ENCODE measurements at regions of chr10 and their contacts with region 1.

Region 1: GRCh38 chr10:110067960-110068770 is 60.4 kb downstream of the ADD3 start:
- DNase-seq: no peak
- ATAC-seq: peak; percentile 62
- H3K4me3 Mint-ChIP-seq: peak overlapping the region; percentile 76
- H3K27ac Mint-ChIP-seq: peak overlapping the region; percentile 97
- H3K4me1 Mint-ChIP-seq: peaks cover 81% of the 10 kb centered on the region
- H3K27me3 Mint-ChIP-seq: no peaks in the 10 kb centered on the region
- CTCF ChIP-seq: no peak

Region 2: GRCh38 chr10:109714869-109715268 is 353.3 kb before region 1 on chr10:
- CTCF ChIA-PET with region 1: no interaction called
- POLR2A ChIA-PET with region 1: no interaction called
- intact Hi-C with region 1: no loop called
- DNase-seq: no peak
- ATAC-seq: no peak
- H3K4me3 Mint-ChIP-seq: no peak overlapping the region
- H3K27ac Mint-ChIP-seq: no peak overlapping the region
- H3K4me1 Mint-ChIP-seq: no peaks in the 10 kb centered on the region
- H3K27me3 Mint-ChIP-seq: no peaks in the 10 kb centered on the region
- CTCF ChIP-seq: no peak

Region 3: GRCh38 chr10:110081911-110082310 is 13.7 kb after region 1 on chr10:
- CTCF ChIA-PET with region 1: interaction called, 4 read pairs
- POLR2A ChIA-PET with region 1: interaction called, 31 read pairs
- intact Hi-C with region 1: loop called (anchors 1 kb)
- DNase-seq: no peak
- ATAC-seq: peak; percentile 35
- H3K4me3 Mint-ChIP-seq: peak overlapping the region; percentile 6
- H3K27ac Mint-ChIP-seq: peak overlapping the region; percentile 80
- H3K4me1 Mint-ChIP-seq: peaks cover 90% of the 10 kb centered on the region
- H3K27me3 Mint-ChIP-seq: no peaks in the 10 kb centered on the region
- CTCF ChIP-seq: no peak

Region 4: GRCh38 chr10:110162741-110163145 is 94.6 kb after region 1 on chr10:
- CTCF ChIA-PET with region 1: no interaction called
- POLR2A ChIA-PET with region 1: no interaction called
- intact Hi-C with region 1: no loop called
- DNase-seq: no peak
- ATAC-seq: no peak
- H3K4me3 Mint-ChIP-seq: no peak overlapping the region
- H3K27ac Mint-ChIP-seq: no peak overlapping the region
- H3K4me1 Mint-ChIP-seq: peaks cover 6% of the 10 kb centered on the region
- H3K27me3 Mint-ChIP-seq: peaks cover 34% of the 10 kb centered on the region
- CTCF ChIP-seq: no peak

Region 5: GRCh38 chr10:110358869-110359629 is 290.9 kb after region 1 on chr10:
- CTCF ChIA-PET with region 1: no interaction called
- POLR2A ChIA-PET with region 1: no interaction called
- intact Hi-C with region 1: no loop called
- DNase-seq: no peak
- ATAC-seq: no peak
- H3K4me3 Mint-ChIP-seq: peak overlapping the region; percentile 24
- H3K27ac Mint-ChIP-seq: peak overlapping the region; percentile 99
- H3K4me1 Mint-ChIP-seq: peaks cover 59% of the 10 kb centered on the region
- H3K27me3 Mint-ChIP-seq: no peaks in the 10 kb centered on the region
- CTCF ChIP-seq: no peak

Measured in activated B cell treated with CpG ODN at 0.5 μM for 24 hours (primary cell).